Activated T-helper 2 cell treated with anti-CD3 and anti-CD28 coated beads, Interferon-gamma antibody, Interleukin-2, Interleukin-4, amounts not matched to agents 10 μg/mL and 5 μg/mL and 100 μg/mL, durations not matched to agents 14 hours and 24 hours and 36 hours (primary cell): ENCODE measurements at regions of chr7 and their contacts with region 1.

Region 1: DNA sequence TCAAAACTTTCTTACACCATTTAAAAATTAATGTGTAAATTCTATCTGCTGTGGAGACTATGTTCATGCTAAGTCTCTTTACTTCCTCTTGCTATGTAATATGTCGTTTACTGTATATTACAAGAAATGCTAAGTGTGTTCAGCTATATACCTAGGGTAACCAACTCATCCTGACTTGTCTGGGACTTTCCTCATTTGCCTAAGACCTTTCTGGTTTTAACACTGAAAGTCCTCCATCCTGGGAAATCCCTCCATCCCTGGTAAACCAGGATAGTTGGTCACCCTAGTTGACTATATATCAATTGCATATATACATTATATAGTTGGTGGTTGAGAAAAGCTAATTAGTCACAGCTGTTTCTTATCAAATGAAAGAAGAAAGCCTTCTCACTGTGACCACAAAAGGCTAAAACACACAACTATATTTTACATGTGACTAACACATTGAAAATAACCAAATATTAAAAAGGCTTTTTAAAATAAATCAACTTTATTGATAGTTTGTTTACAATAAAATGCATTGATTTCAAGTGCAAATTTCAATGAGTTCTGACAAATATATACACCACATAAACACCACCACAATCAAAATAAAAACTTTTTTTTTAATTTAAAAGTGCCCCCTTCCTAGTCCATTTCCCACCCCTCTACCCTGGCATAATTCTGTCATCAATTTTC is 167.7 kb upstream of the INHBA start:
- DNase-seq: no peak
- H3K4me3 Mint-ChIP-seq: no peak overlapping the region
- H3K27ac Mint-ChIP-seq: peak overlapping the region; percentile 74
- H3K4me1 Mint-ChIP-seq: peaks cover 58% of the 10 kb centered on the region
- H3K27me3 Mint-ChIP-seq: no peaks in the 10 kb centered on the region

Region 2: GRCh38 chr7:41731492-41732435 is 138.8 kb before region 1 on chr7:
- intact Hi-C with region 1: loop called (anchors 5 kb)
- DNase-seq: no peak
- H3K4me3 Mint-ChIP-seq: no peak overlapping the region
- H3K27ac Mint-ChIP-seq: no peak overlapping the region
- H3K4me1 Mint-ChIP-seq: peaks cover 13% of the 10 kb centered on the region
- H3K27me3 Mint-ChIP-seq: peaks cover 22% of the 10 kb centered on the region

Region 3: DNA sequence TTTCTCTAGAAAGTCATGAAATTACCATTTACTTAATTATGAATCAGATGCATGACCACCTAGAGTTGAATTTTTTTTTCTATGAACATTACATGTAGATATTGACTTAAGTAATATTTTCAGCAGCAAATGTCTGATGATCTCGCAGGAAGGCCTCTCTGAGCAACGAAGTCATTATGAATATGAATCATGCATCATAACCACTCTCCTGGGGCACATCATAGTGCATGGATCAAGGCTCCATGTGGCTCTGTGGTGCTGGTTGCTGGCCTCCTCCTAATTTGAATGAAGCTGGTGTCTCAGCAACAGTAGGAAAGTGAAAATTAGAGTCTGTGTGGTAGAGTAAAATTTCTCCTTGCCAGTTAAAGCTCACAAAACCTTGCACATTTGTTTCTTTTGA is 46.3 kb before region 1 on chr7:
- intact Hi-C with region 1: loop called (anchors 5 kb)
- DNase-seq: no peak
- H3K4me3 Mint-ChIP-seq: no peak overlapping the region
- H3K27ac Mint-ChIP-seq: no peak overlapping the region
- H3K4me1 Mint-ChIP-seq: peaks cover 14% of the 10 kb centered on the region
- H3K27me3 Mint-ChIP-seq: peaks cover 6% of the 10 kb centered on the region